Spleen (tissue), 13 donors: ENCODE measurements at regions of chr7 and their contacts with region 1.

Region 1: GRCh38 chr7:98400542-98401340 is at the start of gene BAIAP2L1:
- DNase-seq: peak; percentile 93
- H3K4me3 ChIP-seq: peak within 1 kb of the TSS; percentile 35 to 77 (median 50)
- H3K27ac ChIP-seq: peak within 1 kb of the TSS in 3 of 8 donors; percentile 14 to 41 (median 40)
- H3K4me1 ChIP-seq: peaks cover 0 to 23% (median 13%) of the 10 kb centered on the region in 6 donors
- H3K27me3 ChIP-seq: peaks cover 0 to 65% (median 14%) of the 10 kb centered on the region in 7 donors
- CTCF ChIP-seq: no peak
- POLR2A ChIP-seq: no peak
- total RNA-seq, gene BAIAP2L1: 0.72 to 2.6 (median 2.1) TPM

Region 2: GRCh38 chr7:98294796-98295382 is 105.9 kb before region 1 on chr7:
- intact Hi-C with region 1: loop called (anchors 10 kb)
- DNase-seq: no peak
- H3K4me3 ChIP-seq: no peak overlapping the region
- H3K27ac ChIP-seq: peak overlapping the region in 2 of 8 donors; percentile 21 to 27
- H3K4me1 ChIP-seq: peaks cover 0 to 33% (median 6%) of the 10 kb centered on the region in 6 donors
- H3K27me3 ChIP-seq: no peaks in the 10 kb centered on the region
- CTCF ChIP-seq: peak in 9 of 11 experiments; percentile 13 to 65 (median 51)
- POLR2A ChIP-seq: no peak